K562 (cell line): ENCODE measurements at regions of chr20 and their contacts with region 1.

Region 1: GRCh38 chr20:2545594-2545993 is 9.2 kb downstream of the TMC2 start:
- DNase-seq: no peak
- ATAC-seq: no peak
- H3K4me3 ChIP-seq: no peak overlapping the region
- H3K27ac ChIP-seq: no peak overlapping the region
- H3K4me1 ChIP-seq: no peaks in the 10 kb centered on the region
- H3K27me3 ChIP-seq: peaks cover 6 to 9% of the 10 kb centered on the region in 2 experiments; a peak in 4 of 5 replicates
- CTCF ChIP-seq: no peak
- EP300 ChIP-seq: no peak
- POLR2A ChIP-seq: no peak
- RAD21 ChIP-seq: no peak

Region 2: GRCh38 chr20:2593756-2594155 is 48.2 kb after region 1 on chr20:
- CTCF ChIA-PET with region 1: no interaction called
- POLR2A ChIA-PET with region 1: no interaction called
- in situ Hi-C with region 1: loop called (anchors 5 kb)
- intact Hi-C with region 1: no loop called
- DNase-seq: no peak
- ATAC-seq: no peak
- H3K4me3 ChIP-seq: no peak overlapping the region
- H3K27ac ChIP-seq: no peak overlapping the region
- H3K4me1 ChIP-seq: no peaks in the 10 kb centered on the region; a peak in 1 of 5 replicates
- H3K27me3 ChIP-seq: peaks cover 0 to 19% of the 10 kb centered on the region in 2 experiments; a peak in 3 of 5 replicates
- CTCF ChIP-seq: no peak
- EP300 ChIP-seq: no peak
- POLR2A ChIP-seq: no peak
- RAD21 ChIP-seq: no peak